Activated CD4-positive, alpha-beta memory T cell treated with anti-CD3 and anti-CD28 coated beads for 36 hours (primary cell): ENCODE measurements at regions of chr6 and their contacts with region 1.

Region 1: DNA sequence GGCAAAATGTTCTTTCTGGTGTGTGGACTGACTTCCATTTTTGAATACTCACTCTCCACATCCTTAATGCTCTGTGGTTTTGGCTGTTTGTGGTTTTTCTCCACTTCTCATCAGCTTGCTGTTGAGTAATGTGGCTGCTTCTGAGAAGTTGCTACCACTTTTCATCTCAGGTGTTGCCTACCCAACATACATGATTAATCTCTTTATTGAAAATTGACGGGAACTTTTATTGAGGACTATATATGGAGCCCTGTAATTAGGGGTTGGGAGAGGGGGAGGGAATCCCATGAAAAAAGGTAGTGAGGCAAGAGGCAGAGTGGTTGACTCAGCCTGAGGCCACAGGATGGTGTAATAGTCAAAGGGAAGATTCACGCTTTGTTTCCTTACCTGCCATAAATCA is 17.6 kb downstream of the IL22RA2 start:
- DNase-seq: peak; percentile 50
- H3K4me3 Mint-ChIP-seq: no peak overlapping the region
- H3K27ac Mint-ChIP-seq: peak overlapping the region; percentile 49
- H3K4me1 Mint-ChIP-seq: peaks cover 16% of the 10 kb centered on the region
- H3K27me3 Mint-ChIP-seq: peaks cover 11% of the 10 kb centered on the region

Region 2: GRCh38 chr6:136607204-136607931 is 548.5 kb before region 1 on chr6:
- CTCF ChIA-PET with region 1: no interaction called
- POLR2A ChIA-PET with region 1: no interaction called
- intact Hi-C with region 1: no loop called
- DNase-seq: no peak
- H3K4me3 Mint-ChIP-seq: no peak overlapping the region
- H3K27ac Mint-ChIP-seq: no peak overlapping the region
- H3K4me1 Mint-ChIP-seq: peaks cover 15% of the 10 kb centered on the region
- H3K27me3 Mint-ChIP-seq: no peaks in the 10 kb centered on the region

Region 3: DNA sequence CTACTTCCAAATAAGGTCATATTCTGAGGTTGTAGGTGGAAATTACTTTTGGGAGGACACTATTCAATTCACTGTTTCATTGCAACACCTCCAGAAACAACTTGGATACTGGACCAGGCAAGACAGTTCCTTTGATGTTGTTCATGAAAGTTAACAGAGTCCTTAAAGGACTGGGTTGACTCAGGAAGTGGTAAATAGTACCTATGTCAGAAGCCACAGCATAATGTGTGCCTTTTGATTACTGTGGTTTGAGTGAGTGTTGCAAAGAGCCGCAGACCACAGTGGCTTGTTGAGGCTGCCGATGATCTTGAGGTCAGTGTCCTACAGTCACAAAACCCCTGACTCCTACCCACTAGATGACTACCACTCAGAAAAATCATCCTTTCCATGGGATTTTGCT is 122.0 kb before region 1 on chr6:
- CTCF ChIA-PET with region 1: no interaction called
- POLR2A ChIA-PET with region 1: no interaction called
- intact Hi-C with region 1: loop called (anchors 2 kb)
- DNase-seq: peak; percentile 83
- H3K4me3 Mint-ChIP-seq: no peak overlapping the region
- H3K27ac Mint-ChIP-seq: peak overlapping the region; percentile 18
- H3K4me1 Mint-ChIP-seq: peaks cover 10% of the 10 kb centered on the region
- H3K27me3 Mint-ChIP-seq: peaks cover 46% of the 10 kb centered on the region

Region 4: DNA sequence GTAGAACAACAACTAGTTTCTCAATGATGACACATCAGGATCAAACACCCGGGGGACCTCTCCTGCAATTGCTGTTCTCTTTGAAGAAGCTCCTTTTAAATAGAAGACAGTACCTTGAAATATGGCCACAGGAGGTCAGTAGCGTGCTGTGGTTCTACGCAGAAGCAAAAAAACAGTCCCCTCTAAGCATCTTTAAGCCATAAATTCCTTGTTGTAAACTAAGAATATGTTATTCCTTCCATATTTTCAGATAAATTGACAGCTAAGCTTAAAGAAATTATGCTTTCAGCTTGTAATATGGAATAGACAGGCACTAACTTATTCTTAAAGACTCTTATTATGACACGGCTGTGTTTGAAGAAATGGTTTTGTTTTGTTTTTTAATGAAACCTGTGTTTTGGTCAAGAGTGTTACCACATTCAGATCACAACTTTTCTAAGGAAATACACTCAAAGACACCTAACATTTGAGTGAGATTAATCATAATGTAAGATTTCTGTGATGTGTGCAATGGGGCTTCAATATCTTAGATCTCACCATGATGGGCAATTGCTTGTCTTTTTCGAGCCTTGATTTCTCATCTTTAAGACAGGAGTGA is 61.3 kb before region 1 on chr6:
- CTCF ChIA-PET with region 1: interaction called, 5 read pairs
- POLR2A ChIA-PET with region 1: no interaction called
- intact Hi-C with region 1: loop called (anchors 2 kb)
- DNase-seq: peak; percentile 68
- H3K4me3 Mint-ChIP-seq: no peak overlapping the region
- H3K27ac Mint-ChIP-seq: no peak overlapping the region
- H3K4me1 Mint-ChIP-seq: peaks cover 22% of the 10 kb centered on the region
- H3K27me3 Mint-ChIP-seq: peaks cover 2% of the 10 kb centered on the region

Region 5: GRCh38 chr6:137102851-137103492 is 52.9 kb before region 1 on chr6:
- CTCF ChIA-PET with region 1: interaction called, 3 read pairs
- POLR2A ChIA-PET with region 1: no interaction called
- intact Hi-C with region 1: loop called (anchors 1 kb)
- DNase-seq: peak; percentile 42
- H3K4me3 Mint-ChIP-seq: no peak overlapping the region
- H3K27ac Mint-ChIP-seq: peak overlapping the region; percentile 67
- H3K4me1 Mint-ChIP-seq: peaks cover 31% of the 10 kb centered on the region
- H3K27me3 Mint-ChIP-seq: no peaks in the 10 kb centered on the region

Region 6: DNA sequence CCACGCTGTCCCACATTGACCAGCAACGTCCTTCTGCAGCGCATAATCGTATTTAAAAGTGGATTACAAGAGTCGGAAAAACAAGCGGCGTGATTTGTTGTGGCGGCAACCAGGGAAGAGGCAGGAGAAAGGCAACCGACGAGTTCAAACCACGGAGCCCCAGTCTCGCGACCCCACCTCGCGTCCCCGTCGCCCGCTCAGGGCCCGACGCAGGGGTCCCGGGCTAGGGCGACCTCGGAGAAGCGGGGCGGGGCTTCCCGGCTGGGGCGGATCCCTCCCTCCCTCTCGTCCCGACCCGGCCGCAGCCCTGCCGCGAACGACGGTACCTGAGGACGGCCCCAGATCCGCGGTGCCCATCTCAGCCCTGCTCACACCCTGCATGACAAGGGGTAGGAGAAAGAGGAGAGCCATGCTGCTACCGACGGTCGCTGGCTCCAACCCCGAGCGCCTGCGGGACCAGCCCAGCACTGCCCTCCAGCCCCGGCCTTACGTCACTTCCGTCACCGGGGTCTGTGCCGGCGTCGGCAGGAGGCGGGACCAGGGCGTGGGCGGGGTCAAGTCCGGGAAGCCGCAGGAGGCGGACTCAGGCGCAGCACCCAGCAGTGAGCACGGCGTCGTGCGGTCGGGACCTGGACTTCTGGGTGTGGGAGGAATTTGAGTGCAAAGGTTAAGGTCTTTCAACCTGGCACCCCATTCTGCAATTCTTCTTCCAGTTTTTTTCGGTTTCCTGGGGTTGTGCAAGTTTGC is 63.3 kb after region 1 on chr6 and contains the start of gene IFNGR1:
- CTCF ChIA-PET with region 1: no interaction called
- POLR2A ChIA-PET with region 1: no interaction called
- intact Hi-C with region 1: loop called (anchors 1 kb)
- DNase-seq: peak; percentile 98
- H3K4me3 Mint-ChIP-seq: peak within 1 kb of the TSS; percentile 92
- H3K27ac Mint-ChIP-seq: peak within 1 kb of the TSS; percentile 97
- H3K4me1 Mint-ChIP-seq: peaks cover 45% of the 10 kb centered on the region
- H3K27me3 Mint-ChIP-seq: no peaks in the 10 kb centered on the region
- total RNA-seq, gene IFNGR1: 27.7 to 29.0 TPM